ENCODE measurements at regions of chr17 and their contacts with region 1.

Region 1: GRCh38 chr17:73156166-73156840 is 8.5 kb upstream of the SSTR2 start:
- DNase-seq: peak; percentile 66 to 88
- ATAC-seq: peak; percentile 97 to 98
- H3K4me3 ChIP-seq: no peak overlapping the region
- H3K27ac ChIP-seq: peak overlapping the region in 1 of 2 experiments; percentile 50; a peak in 2 of 6 replicates
- H3K4me1 ChIP-seq: peaks cover 15% of the 10 kb centered on the region
- CTCF ChIP-seq: peak; percentile 67
- EP300 ChIP-seq: no peak
- POLR2A ChIP-seq: no peak
- RAD21 ChIP-seq: peak; percentile 81 to 84

Region 2: GRCh38 chr17:73145641-73146040 is 10.7 kb before region 1 on chr17:
- CTCF ChIA-PET with region 1: interaction called, 16 read pairs
- POLR2A ChIA-PET with region 1: no interaction called
- DNase-seq: no peak
- ATAC-seq: no peak
- H3K4me3 ChIP-seq: no peak overlapping the region
- H3K27ac ChIP-seq: no peak overlapping the region
- H3K4me1 ChIP-seq: no peaks in the 10 kb centered on the region
- CTCF ChIP-seq: no peak
- EP300 ChIP-seq: no peak
- POLR2A ChIP-seq: no peak
- RAD21 ChIP-seq: no peak

Region 3: DNA sequence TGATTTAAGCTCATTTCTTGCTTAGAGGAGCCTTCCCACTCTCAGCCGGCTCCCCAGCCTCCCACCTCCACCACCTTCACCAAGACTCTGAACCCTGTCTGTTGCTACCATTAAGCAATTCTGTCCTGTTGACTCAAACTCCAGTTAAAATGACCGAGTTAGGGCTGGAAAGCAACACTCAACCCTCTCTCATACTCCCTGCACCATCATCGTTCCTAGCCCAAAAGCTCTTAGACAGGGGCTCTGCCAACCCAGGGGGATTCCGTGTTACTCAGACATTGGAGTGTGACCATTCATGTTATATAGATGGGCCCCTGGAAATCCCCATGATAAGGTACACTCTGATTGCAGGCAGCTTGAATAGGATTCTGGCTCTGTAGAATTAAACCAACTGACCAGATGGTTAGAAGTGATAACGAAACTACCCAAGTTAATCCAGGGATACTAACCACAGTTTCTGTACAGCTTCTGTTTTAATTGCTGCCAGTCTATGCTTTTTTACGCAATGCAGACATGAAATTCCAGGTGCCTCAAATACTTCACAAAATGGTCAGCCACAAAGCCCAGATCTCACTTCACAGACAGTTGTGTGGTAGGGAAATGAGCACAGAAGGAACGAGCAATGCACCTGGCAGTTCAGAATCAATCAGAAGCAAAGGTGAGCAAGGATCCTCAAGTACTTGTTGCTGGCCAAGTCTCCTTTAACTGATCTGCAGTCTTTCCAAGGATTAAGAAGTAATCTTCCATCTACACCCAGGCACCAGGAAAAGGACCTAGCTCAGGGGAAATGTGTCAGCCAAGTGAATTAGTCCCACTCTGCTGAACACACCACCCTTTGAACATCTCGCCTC is 10.7 kb after region 1 on chr17:
- CTCF ChIA-PET with region 1: interaction called, 16 read pairs
- POLR2A ChIA-PET with region 1: no interaction called
- DNase-seq: no peak
- ATAC-seq: no peak
- H3K4me3 ChIP-seq: peak overlapping the region; percentile 56; the same call in 2 of the 3 replicates
- H3K27ac ChIP-seq: no peak overlapping the region
- H3K4me1 ChIP-seq: peaks cover 27% of the 10 kb centered on the region
- CTCF ChIP-seq: no peak
- EP300 ChIP-seq: no peak
- POLR2A ChIP-seq: no peak
- RAD21 ChIP-seq: no peak

Region 4: GRCh38 chr17:73231841-73232586 is 75.7 kb after region 1 on chr17:
- CTCF ChIA-PET with region 1: no interaction called
- POLR2A ChIA-PET with region 1: no interaction called
- DNase-seq: peak; percentile 94 to 95
- ATAC-seq: peak; percentile 84 to 95
- H3K4me3 ChIP-seq: peak overlapping the region; percentile 88
- H3K27ac ChIP-seq: peak overlapping the region; percentile 89 to 95
- H3K4me1 ChIP-seq: peaks cover 44% of the 10 kb centered on the region
- CTCF ChIP-seq: no peak
- EP300 ChIP-seq: no peak
- POLR2A ChIP-seq: peak; percentile 88
- RAD21 ChIP-seq: peak in 1 of 2 experiments; percentile 1; a peak in 1 of 5 replicates

Measured in A549 (cell line).